ENCODE measurements at regions of chr12 and their contacts with region 1.

Region 1: GRCh38 chr12:93569656-93570551 is 2.6 kb upstream of the SOCS2 start:
- DNase-seq: peak; percentile 84
- ATAC-seq: peak; percentile 65
- H3K4me3 ChIP-seq: peak overlapping the region; percentile 76
- H3K27ac ChIP-seq: peak overlapping the region; percentile 73
- H3K4me1 ChIP-seq: no peaks in the 10 kb centered on the region
- H3K27me3 ChIP-seq: no peaks in the 10 kb centered on the region
- CTCF ChIP-seq: peak; percentile 78
- POLR2A ChIP-seq: no peak
- RAD21 ChIP-seq: peak; percentile 81

Region 2: DNA sequence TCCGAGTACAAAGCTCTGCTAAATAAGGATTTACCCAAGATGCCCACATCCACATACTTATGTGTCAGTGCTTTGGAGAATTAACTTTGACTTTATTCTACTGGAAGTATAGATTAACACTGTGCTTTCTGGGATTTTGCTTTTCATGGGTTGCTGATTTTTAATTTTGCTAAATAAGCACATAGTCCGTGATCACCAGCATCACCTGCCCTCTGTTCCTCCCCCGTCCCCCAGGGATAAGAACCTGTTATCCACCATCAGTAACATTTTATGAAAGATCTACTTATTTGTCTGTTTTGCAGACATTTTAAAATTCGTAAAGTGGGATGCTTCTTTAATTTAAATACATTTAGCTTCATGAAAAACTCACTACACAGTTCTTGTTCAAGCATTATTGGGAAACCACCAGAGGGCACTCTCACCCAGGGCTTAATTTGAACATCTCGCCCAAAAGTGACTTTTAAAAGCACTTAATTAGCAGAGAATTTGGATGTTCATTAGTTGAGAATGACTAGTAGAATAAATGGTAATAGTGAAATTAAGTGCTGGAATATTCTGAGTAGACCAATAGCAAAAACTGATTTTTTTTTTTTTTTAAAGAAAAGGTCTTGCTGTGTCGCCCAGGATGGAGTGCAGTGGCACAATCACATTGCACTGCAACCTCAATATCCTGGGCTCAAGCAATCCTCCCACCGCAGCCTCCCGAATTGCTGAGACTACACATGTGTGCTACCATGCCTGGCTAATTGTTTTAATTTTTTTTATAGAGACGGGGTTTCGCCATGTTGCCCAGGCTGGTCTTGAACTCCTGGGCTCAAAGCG is 66.9 kb before region 1 on chr12:
- CTCF ChIA-PET with region 1: interaction called, 11 read pairs
- POLR2A ChIA-PET with region 1: no interaction called
- dilution Hi-C with region 1: no loop called
- in situ Hi-C with region 1: no loop called
- intact Hi-C with region 1: loop called (anchors 2 kb)
- DNase-seq: peak; percentile 48
- ATAC-seq: no peak
- H3K4me3 ChIP-seq: no peak overlapping the region
- H3K27ac ChIP-seq: no peak overlapping the region
- H3K4me1 ChIP-seq: 0 out of 2 replicates have a peak, but pooled peaks cover 1% of the 10 kb centered on the region
- H3K27me3 ChIP-seq: no peaks in the 10 kb centered on the region
- CTCF ChIP-seq: peak; percentile 77
- POLR2A ChIP-seq: no peak
- RAD21 ChIP-seq: peak; percentile 85

Region 3: GRCh38 chr12:93616584-93617101 is 46.7 kb after region 1 on chr12:
- CTCF ChIA-PET with region 1: no interaction called
- POLR2A ChIA-PET with region 1: interaction called, 24 read pairs
- dilution Hi-C with region 1: no loop called
- in situ Hi-C with region 1: no loop called
- intact Hi-C with region 1: no loop called
- DNase-seq: peak; percentile 81
- ATAC-seq: peak; percentile 49; the same call in 1 of the 2 replicates
- H3K4me3 ChIP-seq: no peak overlapping the region
- H3K27ac ChIP-seq: no peak overlapping the region
- H3K4me1 ChIP-seq: peaks cover 5% of the 10 kb centered on the region
- H3K27me3 ChIP-seq: no peaks in the 10 kb centered on the region
- CTCF ChIP-seq: no peak
- POLR2A ChIP-seq: no peak
- RAD21 ChIP-seq: no peak

Region 4: GRCh38 chr12:93742110-93742934 is 172.4 kb after region 1 on chr12:
- CTCF ChIA-PET with region 1: no interaction called
- POLR2A ChIA-PET with region 1: no interaction called
- dilution Hi-C with region 1: no loop called
- in situ Hi-C with region 1: loop called (anchors 5 kb)
- intact Hi-C with region 1: loop called (anchors 1 kb)
- DNase-seq: peak; percentile 60
- ATAC-seq: peak; percentile 97
- H3K4me3 ChIP-seq: peak overlapping the region; percentile 65
- H3K27ac ChIP-seq: peak overlapping the region; percentile 65
- H3K4me1 ChIP-seq: peaks cover 5% of the 10 kb centered on the region
- H3K27me3 ChIP-seq: no peaks in the 10 kb centered on the region
- CTCF ChIP-seq: peak; percentile 57
- POLR2A ChIP-seq: 0 out of 2 replicates have a peak, but pooled peaks have one; percentile 21
- RAD21 ChIP-seq: peak; percentile 69

Region 5: GRCh38 chr12:93894391-93895088 is 324.6 kb after region 1 on chr12:
- CTCF ChIA-PET with region 1: no interaction called
- POLR2A ChIA-PET with region 1: no interaction called
- dilution Hi-C with region 1: no loop called
- in situ Hi-C with region 1: no loop called
- intact Hi-C with region 1: loop called (anchors 10 kb)
- DNase-seq: peak; percentile 52
- ATAC-seq: peak; percentile 57
- H3K4me3 ChIP-seq: no peak overlapping the region
- H3K27ac ChIP-seq: no peak overlapping the region
- H3K4me1 ChIP-seq: peaks cover 17% of the 10 kb centered on the region
- H3K27me3 ChIP-seq: no peaks in the 10 kb centered on the region
- CTCF ChIP-seq: no peak
- POLR2A ChIP-seq: no peak
- RAD21 ChIP-seq: no peak

Region 6: DNA sequence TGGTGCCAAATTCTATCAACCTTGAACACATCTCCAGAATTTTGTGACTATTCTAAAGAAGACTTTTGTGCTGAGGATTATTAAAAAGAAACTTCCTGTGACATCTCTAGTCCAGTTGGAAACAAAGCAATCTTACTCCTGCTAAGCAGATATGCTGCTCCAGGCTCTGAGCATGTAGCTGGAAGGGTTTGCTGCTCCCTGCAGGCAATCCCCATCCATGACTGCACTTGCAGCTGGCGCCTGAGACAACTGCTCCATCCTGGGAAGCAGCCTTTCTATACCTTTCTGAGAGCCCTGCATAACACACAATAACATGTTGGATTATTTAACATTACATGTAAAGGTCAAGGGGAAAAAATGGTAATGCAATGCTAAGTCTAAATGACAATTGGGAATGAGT is 1328.5 kb after region 1 on chr12:
- CTCF ChIA-PET with region 1: no interaction called
- POLR2A ChIA-PET with region 1: no interaction called
- dilution Hi-C with region 1: no loop called
- in situ Hi-C with region 1: no loop called
- intact Hi-C with region 1: no loop called
- DNase-seq: no peak
- ATAC-seq: no peak
- H3K4me3 ChIP-seq: no peak overlapping the region
- H3K27ac ChIP-seq: no peak overlapping the region
- H3K4me1 ChIP-seq: no peaks in the 10 kb centered on the region
- H3K27me3 ChIP-seq: no peaks in the 10 kb centered on the region; the same call in none of the 2 replicates
- CTCF ChIP-seq: no peak
- POLR2A ChIP-seq: no peak
- RAD21 ChIP-seq: no peak

Measured in IMR-90 (cell line).